RWPE1 (cell line): ENCODE measurements at regions of chr1 and their contacts with region 1.

Region 1: GRCh38 chr1:15847100-15847892 is at the start of gene SPEN:
- DNase-seq: peak; percentile 89
- H3K27ac ChIP-seq: peak within 1 kb of the TSS; percentile 96
- CTCF ChIP-seq: no peak

Region 2: DNA sequence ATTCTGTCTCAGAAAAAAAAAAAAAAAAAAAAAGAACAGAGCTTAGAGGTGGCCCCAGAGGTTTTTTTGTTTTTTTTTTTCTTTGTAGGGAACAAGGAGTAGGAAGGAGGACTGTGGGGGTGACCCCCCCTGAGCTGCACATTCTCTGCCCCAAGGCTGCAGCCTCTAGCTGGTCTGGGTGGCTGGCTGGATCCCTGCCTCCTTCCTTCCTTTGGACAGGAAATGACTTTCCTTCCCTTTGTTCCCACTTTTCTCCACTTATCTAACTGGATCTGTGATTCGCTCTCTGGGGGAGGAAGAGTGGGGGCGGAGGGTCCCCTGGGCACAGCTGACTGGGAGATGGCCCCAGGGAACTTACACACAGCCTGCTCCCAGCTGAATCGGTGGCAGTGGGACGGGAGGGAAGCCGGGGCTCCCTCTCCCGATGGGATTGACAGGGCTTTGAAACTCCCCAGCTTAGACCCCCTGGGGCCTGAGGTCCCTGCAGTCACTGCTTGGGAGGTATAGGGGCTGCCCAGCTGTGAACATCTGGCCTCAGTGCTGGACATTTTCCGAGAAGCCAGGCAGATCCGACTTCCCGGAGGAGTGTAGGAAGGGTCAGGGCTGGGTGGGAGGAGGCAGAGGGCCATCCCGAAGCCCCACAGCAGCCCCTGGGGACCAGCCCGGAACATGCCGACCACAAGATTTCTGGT is 86.6 kb before region 1 on chr1:
- CTCF ChIA-PET with region 1: no interaction called
- POLR2A ChIA-PET with region 1: interaction called, 12 read pairs
- DNase-seq: peak; percentile 66
- H3K27ac ChIP-seq: peak overlapping the region; percentile 98
- CTCF ChIP-seq: no peak

Region 3: DNA sequence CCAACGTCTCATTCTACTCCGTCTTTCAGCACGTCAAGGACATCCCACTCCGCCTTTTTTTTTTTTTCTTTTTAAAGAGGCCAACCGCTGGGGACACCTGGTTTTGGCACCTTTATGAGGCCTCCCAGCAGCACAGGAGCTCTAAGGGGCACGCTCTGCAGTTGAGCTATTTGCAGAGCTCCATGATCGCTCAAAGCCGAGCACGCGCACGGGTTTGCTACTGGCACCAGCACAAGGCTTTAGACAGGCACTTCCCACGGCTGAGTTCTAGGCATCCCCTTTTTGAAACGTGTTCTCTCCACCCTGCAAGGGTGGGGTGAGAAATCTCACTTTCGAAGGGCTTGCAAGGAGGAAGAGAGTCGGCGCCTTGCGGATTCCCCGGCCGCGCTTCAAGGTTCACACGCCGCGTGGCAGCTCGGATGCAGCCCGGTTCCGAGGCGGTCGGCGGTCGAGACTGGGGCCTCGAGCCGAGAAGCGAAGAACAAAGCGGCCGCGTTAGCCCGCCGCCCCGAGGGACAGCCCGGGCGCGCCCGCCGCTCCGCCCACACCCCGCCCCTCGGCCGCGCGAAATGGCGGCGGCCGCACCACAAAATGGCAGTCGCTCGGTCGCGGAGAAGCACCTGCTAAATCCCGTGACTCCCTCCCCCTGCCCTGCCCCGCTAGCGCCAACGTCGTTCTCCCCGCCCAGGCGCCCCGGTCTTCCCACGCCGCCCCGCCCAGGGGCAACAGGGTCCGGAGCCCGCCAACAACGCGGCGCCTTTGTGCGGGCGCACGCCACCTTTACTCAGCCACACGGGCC is 12.7 kb before region 1 on chr1:
- CTCF ChIA-PET with region 1: interaction called, 3 read pairs
- POLR2A ChIA-PET with region 1: interaction called, 12 read pairs
- DNase-seq: peak; percentile 83
- H3K27ac ChIP-seq: peak overlapping the region; percentile 100
- CTCF ChIP-seq: no peak